Vagina (tissue), 2 donors: ENCODE measurements at regions of chr20 and their contacts with region 1.

Region 1: DNA sequence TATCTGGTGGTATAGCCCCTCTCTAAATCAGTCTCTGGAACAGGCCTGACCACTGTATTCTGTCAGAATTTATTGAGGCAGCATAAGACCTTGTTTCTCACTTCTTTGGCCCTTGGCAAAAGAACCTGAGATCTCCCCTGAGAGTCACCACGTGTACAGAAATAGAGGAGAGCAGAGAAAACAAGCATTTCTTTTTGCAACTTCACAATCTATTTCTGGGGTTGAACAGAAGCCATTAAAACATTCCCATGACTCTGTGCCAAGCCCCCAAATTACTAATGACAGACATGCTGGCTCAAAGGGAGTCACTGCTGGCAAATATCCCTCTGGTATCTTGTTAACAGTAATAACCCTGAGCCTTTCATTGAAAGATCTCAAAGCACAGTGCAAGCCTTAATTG is 395.3 kb downstream of the MAFB start:
- DNase-seq: no peak
- H3K4me3 ChIP-seq: no peak overlapping the region
- H3K27ac ChIP-seq: peak overlapping the region; percentile 2
- H3K4me1 ChIP-seq: peaks cover 11% of the 10 kb centered on the region
- H3K27me3 ChIP-seq: no peaks in the 10 kb centered on the region
- CTCF ChIP-seq: no peak
- POLR2A ChIP-seq: no peak

Region 2: GRCh38 chr20:38941726-38942389 is 1351.9 kb before region 1 on chr20:
- intact Hi-C with region 1: loop called (anchors 10 kb)
- DNase-seq: no peak
- H3K4me3 ChIP-seq: no peak overlapping the region
- H3K27ac ChIP-seq: no peak overlapping the region
- H3K4me1 ChIP-seq: no peaks in the 10 kb centered on the region
- H3K27me3 ChIP-seq: no peaks in the 10 kb centered on the region
- CTCF ChIP-seq: no peak
- POLR2A ChIP-seq: no peak